GM10248 (cell line): ENCODE measurements at regions of chr13 and their contacts with region 1.

Region 1: GRCh38 chr13:44573790-44574465 is 2.2 kb downstream of the TSC22D1 start:
- DNase-seq: peak; percentile 25
- CTCF ChIP-seq: peak; percentile 15

Region 2: DNA sequence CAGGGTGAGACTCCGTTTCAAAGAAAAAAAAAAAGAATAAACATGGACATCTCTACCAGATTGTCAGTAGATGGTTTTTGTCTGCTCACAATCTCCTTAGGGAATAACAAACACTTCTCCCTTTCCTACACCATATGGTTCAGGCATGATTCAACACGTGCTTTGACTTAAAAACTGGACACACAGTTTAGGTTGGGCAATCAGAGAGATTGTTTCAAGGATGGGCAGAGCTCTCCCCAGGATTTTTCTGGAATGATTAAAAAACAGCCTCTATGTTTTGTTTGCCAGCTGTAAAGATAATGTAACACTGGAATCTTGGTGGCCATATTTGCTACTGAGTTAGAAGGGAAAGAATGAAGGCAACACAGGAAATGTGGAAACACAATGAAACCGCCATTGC is 152.3 kb after region 1 on chr13:
- CTCF ChIA-PET with region 1: no interaction called
- POLR2A ChIA-PET with region 1: interaction called, 10 read pairs
- DNase-seq: no peak
- CTCF ChIP-seq: no peak